ENCODE measurements at regions of chr3 and their contacts with region 1.

Region 1: GRCh38 chr3:17258823-17259436 is 374.2 kb downstream of the PLCL2 start:
- DNase-seq: peak; percentile 19
- H3K4me3 Mint-ChIP-seq: no peak overlapping the region
- H3K27ac Mint-ChIP-seq: no peak overlapping the region
- H3K4me1 Mint-ChIP-seq: no peaks in the 10 kb centered on the region
- H3K27me3 Mint-ChIP-seq: no peaks in the 10 kb centered on the region

Region 2: GRCh38 chr3:17412950-17413530 is 154.1 kb after region 1 on chr3:
- CTCF ChIA-PET with region 1: interaction called, 8 read pairs
- intact Hi-C with region 1: loop called (anchors 1 kb)
- DNase-seq: peak; percentile 10
- H3K4me3 Mint-ChIP-seq: no peak overlapping the region
- H3K27ac Mint-ChIP-seq: no peak overlapping the region
- H3K4me1 Mint-ChIP-seq: no peaks in the 10 kb centered on the region
- H3K27me3 Mint-ChIP-seq: no peaks in the 10 kb centered on the region

Region 3: DNA sequence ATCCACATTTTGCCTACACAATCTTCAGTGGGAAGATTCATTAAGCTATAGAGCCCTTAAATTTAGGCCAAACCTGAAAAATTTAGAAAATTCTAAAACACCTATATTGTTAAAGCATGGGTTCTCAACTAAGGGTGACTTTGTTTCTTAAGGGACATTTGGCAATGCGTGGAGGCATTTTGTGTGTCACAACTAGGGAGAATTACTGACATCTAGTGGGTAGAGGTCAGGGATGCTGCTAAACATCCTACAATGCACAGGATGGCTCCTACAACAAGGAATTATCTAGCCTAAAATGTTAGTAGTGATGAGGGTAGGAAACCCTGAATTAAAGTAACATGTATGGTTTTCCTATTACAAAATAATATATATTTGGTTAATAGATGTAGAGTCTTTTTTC is 427.7 kb after region 1 on chr3:
- CTCF ChIA-PET with region 1: no interaction called
- intact Hi-C with region 1: loop called (anchors 2 kb)
- DNase-seq: no peak
- H3K4me3 Mint-ChIP-seq: no peak overlapping the region
- H3K27ac Mint-ChIP-seq: no peak overlapping the region
- H3K4me1 Mint-ChIP-seq: no peaks in the 10 kb centered on the region
- H3K27me3 Mint-ChIP-seq: no peaks in the 10 kb centered on the region

Measured in activated naive CD4-positive, alpha-beta T cell treated with anti-CD3 and anti-CD28 coated beads for 36 hours (primary cell).